Aorta (tissue), 5 donors: ENCODE measurements at regions of chr13 and their contacts with region 1.

Region 1: GRCh38 chr13:75474956-75475355 is 7.0 kb downstream of the TBC1D4 start:
- DNase-seq: no peak
- ATAC-seq: no peak
- H3K4me3 ChIP-seq: no peak overlapping the region
- H3K27ac ChIP-seq: no peak overlapping the region
- H3K4me1 ChIP-seq: no peaks in the 10 kb centered on the region
- H3K27me3 ChIP-seq: no peaks in the 10 kb centered on the region

Region 2: DNA sequence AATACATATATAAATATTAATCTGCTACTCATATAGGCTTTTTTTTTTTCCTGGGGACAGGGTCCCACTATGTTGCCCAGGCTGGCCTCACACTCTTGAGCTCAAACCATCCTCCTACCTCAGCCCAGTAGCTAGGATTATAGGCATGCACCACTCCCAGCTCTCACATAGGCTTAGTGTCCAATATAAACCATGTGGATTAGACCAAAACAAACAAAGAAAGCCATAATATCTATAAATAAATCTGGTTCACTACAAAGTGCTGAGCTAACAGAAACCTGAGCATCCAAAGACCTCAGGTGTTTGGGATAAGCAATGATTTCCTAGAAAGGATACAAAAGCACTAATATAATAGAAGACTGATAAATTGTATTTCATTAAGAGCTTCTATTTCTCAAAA is 19.0 kb before region 1 on chr13:
- intact Hi-C with region 1: loop called in 1 of 2 experiments (anchors 2 kb)
- DNase-seq: no peak
- ATAC-seq: no peak
- H3K4me3 ChIP-seq: no peak overlapping the region
- H3K27ac ChIP-seq: no peak overlapping the region
- H3K4me1 ChIP-seq: no peaks in the 10 kb centered on the region
- H3K27me3 ChIP-seq: no peaks in the 10 kb centered on the region

Region 3: DNA sequence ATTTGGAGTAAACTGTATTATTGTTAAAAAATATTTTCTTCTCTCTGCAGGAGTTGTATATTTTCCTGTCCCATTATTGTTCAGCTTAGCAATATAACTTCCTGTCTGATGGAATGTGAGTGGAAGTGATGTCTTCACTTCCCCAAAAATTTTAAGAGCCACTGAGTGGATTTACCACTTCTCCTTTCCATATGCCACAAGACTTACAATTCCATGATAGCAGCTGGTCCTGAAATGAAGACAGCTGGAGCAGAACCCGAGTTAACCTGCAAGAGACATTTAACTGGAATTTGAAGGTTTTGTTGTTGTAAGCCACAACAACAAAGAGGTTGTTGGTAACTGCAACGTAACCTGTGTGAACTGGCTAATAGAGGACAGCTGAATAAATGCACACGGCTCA is 30.4 kb after region 1 on chr13:
- intact Hi-C with region 1: no loop called
- DNase-seq: no peak
- ATAC-seq: no peak
- H3K4me3 ChIP-seq: no peak overlapping the region
- H3K27ac ChIP-seq: no peak overlapping the region
- H3K4me1 ChIP-seq: no peaks in the 10 kb centered on the region
- H3K27me3 ChIP-seq: no peaks in the 10 kb centered on the region

Region 4: GRCh38 chr13:75635076-75635827 is 160.3 kb after region 1 on chr13:
- intact Hi-C with region 1: no loop called
- DNase-seq: peak; percentile 50 to 75
- ATAC-seq: peak; percentile 11
- H3K4me3 ChIP-seq: peak overlapping the region; percentile 60 to 90
- H3K27ac ChIP-seq: peak overlapping the region in 1 of 2 donors; percentile 56
- H3K4me1 ChIP-seq: no peaks in the 10 kb centered on the region
- H3K27me3 ChIP-seq: no peaks in the 10 kb centered on the region